OCI-LY7 (cell line): ENCODE measurements at regions of chr1 and their contacts with region 1.

Region 1: GRCh38 chr1:42777852-42778251 is 6.9 kb upstream of the TMEM269 start:
- DNase-seq: peak; percentile 57
- H3K4me3 ChIP-seq: no peak overlapping the region
- H3K27ac ChIP-seq: no peak overlapping the region
- H3K4me1 ChIP-seq: no peaks in the 10 kb centered on the region
- CTCF ChIP-seq: peak; percentile 87

Region 2: DNA sequence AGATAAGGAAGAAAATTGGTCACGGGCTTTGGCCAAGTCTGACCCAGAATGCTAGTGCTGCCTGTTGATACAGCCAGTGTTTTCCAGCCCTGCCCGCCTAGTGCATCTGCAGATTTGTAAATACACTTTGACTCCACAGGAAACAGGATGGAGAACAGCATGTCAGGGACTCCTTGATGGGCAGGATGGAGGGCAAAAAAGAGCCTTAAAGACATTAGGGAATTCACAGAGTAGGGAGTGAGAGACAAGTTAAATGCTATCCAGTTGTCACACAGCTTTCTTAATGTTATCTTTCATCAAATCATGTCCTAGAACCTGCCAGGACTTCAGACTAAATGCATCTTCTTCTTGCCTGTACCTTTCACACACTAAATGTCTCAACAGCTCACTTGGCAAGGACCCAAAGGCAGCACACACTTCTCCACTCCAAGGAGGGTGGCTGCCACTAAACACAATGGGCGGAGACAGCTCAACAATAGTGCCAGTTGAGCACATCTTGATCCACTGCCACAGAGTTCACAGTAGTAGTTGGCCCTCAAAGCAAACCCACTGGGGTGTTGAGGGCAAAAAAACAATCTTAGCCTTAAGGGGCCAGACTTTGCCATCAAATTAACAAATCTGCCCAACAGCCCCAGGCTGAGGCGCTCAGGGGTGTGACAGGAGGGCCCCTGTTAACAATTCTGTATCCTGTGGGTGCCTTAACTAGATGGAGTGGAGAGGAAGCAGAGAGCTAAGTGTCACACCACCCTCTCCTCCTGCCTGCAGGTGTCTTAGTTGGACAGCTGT is 861.9 kb before region 1 on chr1:
- CTCF ChIA-PET with region 1: no interaction called
- POLR2A ChIA-PET with region 1: no interaction called
- intact Hi-C with region 1: no loop called
- DNase-seq: no peak
- H3K4me3 ChIP-seq: no peak overlapping the region
- H3K27ac ChIP-seq: no peak overlapping the region
- H3K4me1 ChIP-seq: no peaks in the 10 kb centered on the region
- CTCF ChIP-seq: no peak

Region 3: DNA sequence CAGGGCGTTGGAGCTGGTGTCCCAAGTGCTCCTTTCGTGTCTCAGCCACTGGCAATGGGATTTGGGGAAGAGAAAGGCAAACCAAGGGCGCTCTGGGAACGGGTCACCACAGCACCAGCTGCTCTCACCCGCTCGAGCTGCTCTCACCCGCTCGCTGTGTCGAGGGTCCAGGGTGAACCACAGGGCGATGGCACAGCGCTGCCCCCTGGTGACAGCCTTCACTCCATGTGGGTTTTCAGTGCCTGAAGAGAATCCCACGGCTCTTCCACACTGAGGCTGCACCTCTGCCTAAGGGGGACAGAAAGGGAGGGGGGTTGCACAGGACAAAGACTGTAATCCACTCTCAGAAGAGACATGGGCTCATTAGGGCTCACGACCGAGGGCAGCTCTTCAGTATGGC is 30.7 kb before region 1 on chr1:
- CTCF ChIA-PET with region 1: no interaction called
- POLR2A ChIA-PET with region 1: no interaction called
- intact Hi-C with region 1: no loop called
- DNase-seq: peak; percentile 34
- H3K4me3 ChIP-seq: no peak overlapping the region
- H3K27ac ChIP-seq: no peak overlapping the region
- H3K4me1 ChIP-seq: no peaks in the 10 kb centered on the region
- CTCF ChIP-seq: peak; percentile 75

Region 4: DNA sequence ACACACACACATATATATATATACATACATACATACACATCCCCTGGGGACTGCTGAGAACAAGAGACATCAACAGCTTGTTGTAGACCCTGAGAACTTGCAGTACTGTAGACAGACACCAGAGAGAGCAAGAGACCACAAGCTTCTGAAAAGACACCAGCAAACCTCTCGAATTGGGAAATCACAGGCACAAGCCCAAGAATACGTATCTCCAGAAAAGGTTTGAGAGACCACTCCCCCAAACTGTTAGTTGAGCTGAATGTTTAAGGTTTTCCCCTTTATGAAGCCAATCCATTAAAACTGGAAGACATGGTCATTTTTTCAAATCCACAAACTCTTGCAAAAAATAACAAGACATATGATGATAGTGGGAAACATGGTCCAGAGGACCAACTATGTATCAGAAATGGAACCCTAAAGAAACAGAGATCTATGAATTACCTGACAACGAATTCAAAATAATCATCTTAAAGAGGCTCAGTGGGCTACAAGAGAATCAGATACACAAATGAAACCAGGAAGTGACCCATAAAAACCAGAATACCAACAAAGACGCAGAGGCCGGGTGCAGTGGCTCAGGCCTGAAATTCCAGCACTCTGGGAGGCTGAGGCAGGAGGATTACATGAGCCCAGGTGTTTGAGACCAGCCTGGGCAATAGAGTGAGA is 135.7 kb after region 1 on chr1:
- CTCF ChIA-PET with region 1: no interaction called
- POLR2A ChIA-PET with region 1: no interaction called
- intact Hi-C with region 1: loop called (anchors 2 kb)
- DNase-seq: peak; percentile 82
- H3K4me3 ChIP-seq: no peak overlapping the region
- H3K27ac ChIP-seq: no peak overlapping the region
- H3K4me1 ChIP-seq: no peaks in the 10 kb centered on the region
- CTCF ChIP-seq: peak; percentile 80